ENCODE measurements at regions of chr5 and their contacts with region 1.

Region 1: DNA sequence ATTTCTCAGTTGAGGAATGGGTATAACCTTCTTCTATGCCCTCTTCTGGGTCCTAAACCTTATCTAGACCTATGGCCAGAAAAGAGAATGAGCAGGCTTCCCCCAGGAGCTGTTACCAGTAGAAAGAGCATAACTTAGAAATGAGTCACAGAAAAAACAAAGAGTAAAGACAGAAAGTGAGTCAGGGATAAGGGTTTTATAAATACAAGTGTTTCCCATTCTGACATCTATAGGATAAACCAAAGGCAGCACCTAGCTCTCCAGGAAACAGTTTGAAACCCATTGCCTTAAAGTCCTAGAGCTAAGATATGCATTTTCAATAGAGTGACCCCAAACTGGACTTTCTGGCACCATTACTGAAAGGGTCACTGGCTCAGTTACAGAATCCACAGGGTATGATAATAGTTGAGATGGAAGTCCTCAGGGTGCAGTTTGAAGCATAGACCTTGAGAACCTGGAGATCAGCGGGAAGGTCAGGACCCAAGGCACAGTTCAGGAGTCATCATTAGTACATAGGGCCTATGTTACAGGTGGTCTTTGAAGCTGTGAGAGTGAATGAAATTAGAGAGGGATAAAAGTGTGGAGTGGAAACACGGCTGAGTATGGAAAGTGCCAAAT is 42.7 kb upstream of the LIFR start:
- DNase-seq: no peak
- ATAC-seq: no peak
- H3K4me3 ChIP-seq: no peak overlapping the region
- H3K27ac ChIP-seq: no peak overlapping the region
- H3K4me1 ChIP-seq: peaks cover 9% of the 10 kb centered on the region
- H3K27me3 ChIP-seq: no peaks in the 10 kb centered on the region

Region 2: DNA sequence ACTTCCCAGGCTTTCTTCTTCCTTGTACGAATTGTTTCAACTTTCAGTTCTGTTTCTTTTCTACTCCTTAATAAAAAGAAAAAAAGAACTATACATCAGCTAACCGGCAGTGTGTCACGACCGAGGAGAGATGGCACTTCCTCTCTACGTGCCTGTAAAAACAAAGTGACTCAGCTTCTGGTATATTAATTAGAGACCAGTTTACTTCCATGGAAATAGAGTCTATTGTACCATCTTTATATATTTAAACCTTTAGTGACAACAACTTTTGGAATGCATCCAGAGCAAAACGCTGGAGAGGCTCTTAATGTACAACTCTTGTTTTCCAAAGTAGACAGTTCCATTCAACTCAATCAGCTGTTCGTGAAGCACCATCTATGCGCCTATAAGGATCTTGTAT is 51.8 kb after region 1 on chr5:
- intact Hi-C with region 1: loop called in 1 of 4 experiments (anchors 10 kb)
- DNase-seq: no peak
- ATAC-seq: peak in 1 of 2 donors; percentile 64
- H3K4me3 ChIP-seq: peak overlapping the region; percentile 37
- H3K27ac ChIP-seq: no peak overlapping the region
- H3K4me1 ChIP-seq: no peaks in the 10 kb centered on the region
- H3K27me3 ChIP-seq: no peaks in the 10 kb centered on the region